ENCODE measurements at regions of chr9 and their contacts with region 1.

Region 1: GRCh38 chr9:124771021-124771866 is at the start of gene NR6A1:
- DNase-seq: peak; percentile 99
- CTCF ChIP-seq: peak; percentile 17

Region 2: GRCh38 chr9:124852829-124853531 is 81.7 kb after region 1 on chr9 and contains the start of gene WDR38:
- in situ Hi-C with region 1: loop called (anchors 5 kb)
- DNase-seq: peak; percentile 94
- CTCF ChIP-seq: peak; percentile 94

Region 3: GRCh38 chr9:125143375-125144090 is 372.3 kb after region 1 on chr9 and contains the start of gene SCAI:
- in situ Hi-C with region 1: loop called (anchors 25 kb)
- DNase-seq: peak; percentile 98
- CTCF ChIP-seq: peak; percentile 90

Region 4: DNA sequence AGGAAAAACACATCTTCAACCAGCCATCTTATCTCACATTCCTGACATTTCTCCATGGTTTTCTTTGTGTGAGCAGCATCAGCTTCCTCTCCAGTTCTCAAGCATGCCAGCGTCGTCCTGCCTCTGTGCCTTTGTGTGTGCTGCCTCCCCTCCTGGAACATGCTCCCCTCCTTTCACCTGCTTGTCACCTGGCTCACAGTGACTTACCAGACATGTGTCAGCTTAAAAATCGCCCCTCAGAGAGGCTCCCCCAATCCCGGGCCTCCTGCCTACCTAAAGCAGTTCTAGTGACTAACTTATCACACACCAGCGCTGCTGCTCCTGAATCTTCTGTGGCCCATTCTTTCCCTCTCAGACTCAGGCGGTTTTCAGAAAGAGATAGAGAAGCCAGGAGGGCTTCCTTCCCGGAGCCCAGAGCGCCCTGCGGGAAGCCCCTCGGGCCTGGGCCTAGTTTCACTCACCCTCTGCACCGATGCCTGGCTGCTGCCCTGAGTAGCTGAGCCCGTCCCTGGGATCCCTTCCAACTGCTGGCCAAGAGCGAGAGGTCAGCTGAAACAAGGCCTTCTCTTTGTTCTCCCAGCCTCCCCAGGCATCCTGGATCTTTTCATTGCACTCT is 1504.2 kb after region 1 on chr9:
- in situ Hi-C with region 1: no loop called
- DNase-seq: no peak
- CTCF ChIP-seq: no peak

Measured in GM13977 (cell line).